OCI-LY7 (cell line): ENCODE measurements at regions of chr21 and their contacts with region 1.

Region 1: DNA sequence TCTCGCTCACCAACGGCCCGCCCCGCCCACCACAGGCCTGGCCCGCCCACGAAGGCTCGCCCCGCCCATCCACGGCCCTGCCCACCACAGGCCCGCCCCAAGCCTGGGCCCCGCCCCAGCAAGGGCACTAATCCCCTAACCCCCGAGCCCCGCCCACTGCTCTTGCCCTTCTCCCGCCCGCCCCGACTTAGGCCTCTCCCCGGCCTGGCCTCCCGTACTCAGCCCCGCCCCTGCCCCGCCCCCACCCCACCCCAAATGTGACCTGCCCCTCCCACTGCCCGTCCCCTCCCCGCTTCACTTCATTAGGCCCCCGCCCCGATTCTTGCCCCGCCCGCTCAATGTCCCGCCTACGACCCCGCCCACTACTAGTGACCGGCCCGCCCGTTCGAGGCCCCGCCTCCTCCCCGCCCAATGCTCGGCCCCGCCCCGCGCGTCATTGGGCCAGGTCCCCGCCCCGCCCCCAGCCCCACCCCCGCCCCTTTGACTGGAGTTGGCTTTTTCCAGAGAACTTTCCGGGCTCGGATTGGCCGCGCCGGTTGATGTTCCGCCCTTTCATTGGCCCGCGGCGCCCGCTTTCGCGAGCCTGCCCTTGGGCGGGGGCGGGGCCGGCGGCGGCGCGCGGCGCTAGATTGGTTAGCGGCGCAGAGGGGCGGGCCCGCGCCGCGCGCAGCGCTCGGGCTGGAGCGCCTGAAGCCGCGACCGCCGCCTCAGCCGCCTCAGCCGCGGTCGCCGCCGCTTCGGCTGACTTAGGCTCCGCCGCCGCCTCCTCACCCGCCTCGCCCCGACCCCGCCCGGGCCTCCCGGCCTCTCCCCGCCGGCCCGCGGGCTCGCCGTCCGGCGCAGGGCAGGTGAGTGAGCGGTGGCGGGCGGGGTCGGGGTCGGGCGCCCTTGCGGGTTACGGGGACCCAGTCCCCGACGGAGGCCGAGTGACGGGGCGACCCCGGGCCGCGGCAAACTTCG is at the start of gene PCBP3:
- DNase-seq: peak; percentile 98
- H3K4me3 ChIP-seq: peak within 1 kb of the TSS; percentile 45
- H3K27ac ChIP-seq: no peak within 1 kb of the TSS
- H3K4me1 ChIP-seq: peaks cover 35% of the 10 kb centered on the region
- CTCF ChIP-seq: no peak
- total RNA-seq, gene PCBP3: 0.39 TPM in 1 of 2 replicates, not detected in the other

Region 2: GRCh38 chr21:44338971-44339910 is 1304.1 kb before region 1 on chr21 and contains the start of gene CFAP410:
- CTCF ChIA-PET with region 1: no interaction called
- POLR2A ChIA-PET with region 1: no interaction called
- intact Hi-C with region 1: loop called (anchors 5 kb)
- DNase-seq: peak; percentile 97
- H3K4me3 ChIP-seq: peak within 1 kb of the TSS; percentile 77
- H3K27ac ChIP-seq: peak within 1 kb of the TSS; percentile 90
- H3K4me1 ChIP-seq: peaks cover 14% of the 10 kb centered on the region
- CTCF ChIP-seq: no peak
- total RNA-seq, gene CFAP410: 11.9 and 20.6 TPM in 2 replicates

Region 3: GRCh38 chr21:44428281-44428942 is 1214.9 kb before region 1 on chr21:
- CTCF ChIA-PET with region 1: no interaction called
- POLR2A ChIA-PET with region 1: no interaction called
- intact Hi-C with region 1: loop called (anchors 5 kb)
- DNase-seq: peak; percentile 86
- H3K4me3 ChIP-seq: no peak overlapping the region
- H3K27ac ChIP-seq: peak overlapping the region; percentile 18
- H3K4me1 ChIP-seq: peaks cover 9% of the 10 kb centered on the region
- CTCF ChIP-seq: no peak

Region 4: GRCh38 chr21:45554477-45555175 is 88.7 kb before region 1 on chr21:
- CTCF ChIA-PET with region 1: no interaction called
- POLR2A ChIA-PET with region 1: no interaction called
- intact Hi-C with region 1: loop called (anchors 5 kb)
- DNase-seq: peak; percentile 72
- H3K4me3 ChIP-seq: peak overlapping the region; percentile 64
- H3K27ac ChIP-seq: no peak overlapping the region
- H3K4me1 ChIP-seq: peaks cover 25% of the 10 kb centered on the region
- CTCF ChIP-seq: peak; percentile 70

Region 5: GRCh38 chr21:45590246-45590725 is 53.0 kb before region 1 on chr21:
- CTCF ChIA-PET with region 1: no interaction called
- POLR2A ChIA-PET with region 1: no interaction called
- intact Hi-C with region 1: loop called (anchors 2 kb)
- DNase-seq: peak; percentile 5
- H3K4me3 ChIP-seq: no peak overlapping the region
- H3K27ac ChIP-seq: no peak overlapping the region
- H3K4me1 ChIP-seq: peaks cover 19% of the 10 kb centered on the region
- CTCF ChIP-seq: no peak

Region 6: GRCh38 chr21:45680215-45680614 is 36.9 kb after region 1 on chr21:
- CTCF ChIA-PET with region 1: no interaction called
- POLR2A ChIA-PET with region 1: no interaction called
- intact Hi-C with region 1: no loop called
- DNase-seq: no peak
- H3K4me3 ChIP-seq: no peak overlapping the region
- H3K27ac ChIP-seq: no peak overlapping the region
- H3K4me1 ChIP-seq: no peaks in the 10 kb centered on the region
- CTCF ChIP-seq: no peak

Region 7: DNA sequence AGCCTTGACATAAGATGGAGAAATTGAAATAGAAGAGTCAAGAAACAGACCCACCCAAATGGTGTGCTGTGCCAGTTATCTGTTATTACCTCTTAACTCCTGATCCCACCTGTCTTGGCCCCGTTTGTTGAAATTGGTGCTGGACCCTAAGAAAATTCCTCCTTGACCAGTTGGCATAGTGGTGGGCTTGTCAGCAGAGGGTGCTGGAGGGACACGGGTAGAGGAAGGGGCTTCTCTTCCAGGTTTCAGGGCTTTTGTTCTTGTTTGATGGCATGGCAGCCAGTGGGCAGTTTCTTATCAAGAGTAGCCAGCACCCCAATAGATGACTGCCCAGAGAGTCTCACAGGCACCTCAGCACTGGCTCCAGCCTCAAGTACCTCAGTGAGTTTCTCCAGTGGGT is 51.8 kb after region 1 on chr21:
- CTCF ChIA-PET with region 1: no interaction called
- POLR2A ChIA-PET with region 1: no interaction called
- intact Hi-C with region 1: no loop called
- DNase-seq: no peak
- H3K4me3 ChIP-seq: no peak overlapping the region
- H3K27ac ChIP-seq: no peak overlapping the region
- H3K4me1 ChIP-seq: no peaks in the 10 kb centered on the region
- CTCF ChIP-seq: 0 out of 2 replicates have a peak, but pooled peaks have one; percentile 33